Natural killer cell (primary cell): ENCODE measurements at regions of chr2 and their contacts with region 1.

Region 1: GRCh38 chr2:37648331-37649011 is 23.0 kb downstream of the CDC42EP3 start:
- DNase-seq: peak; percentile 57 to 72
- ATAC-seq: peak; percentile 82 to 91 (median 87)
- H3K4me3 ChIP-seq: no peak overlapping the region
- H3K4me3 Mint-ChIP-seq: peak overlapping the region; percentile 93
- H3K27ac ChIP-seq: peak overlapping the region; percentile 77
- H3K27ac Mint-ChIP-seq: peak overlapping the region; percentile 91 to 96
- H3K4me1 ChIP-seq: peaks cover 72% of the 10 kb centered on the region
- H3K4me1 Mint-ChIP-seq: peaks cover 93 to 95% of the 10 kb centered on the region in 2 donors
- H3K27me3 ChIP-seq: no peaks in the 10 kb centered on the region
- H3K27me3 Mint-ChIP-seq: no peaks in the 10 kb centered on the region
- CTCF ChIP-seq: peak; percentile 47

Region 2: DNA sequence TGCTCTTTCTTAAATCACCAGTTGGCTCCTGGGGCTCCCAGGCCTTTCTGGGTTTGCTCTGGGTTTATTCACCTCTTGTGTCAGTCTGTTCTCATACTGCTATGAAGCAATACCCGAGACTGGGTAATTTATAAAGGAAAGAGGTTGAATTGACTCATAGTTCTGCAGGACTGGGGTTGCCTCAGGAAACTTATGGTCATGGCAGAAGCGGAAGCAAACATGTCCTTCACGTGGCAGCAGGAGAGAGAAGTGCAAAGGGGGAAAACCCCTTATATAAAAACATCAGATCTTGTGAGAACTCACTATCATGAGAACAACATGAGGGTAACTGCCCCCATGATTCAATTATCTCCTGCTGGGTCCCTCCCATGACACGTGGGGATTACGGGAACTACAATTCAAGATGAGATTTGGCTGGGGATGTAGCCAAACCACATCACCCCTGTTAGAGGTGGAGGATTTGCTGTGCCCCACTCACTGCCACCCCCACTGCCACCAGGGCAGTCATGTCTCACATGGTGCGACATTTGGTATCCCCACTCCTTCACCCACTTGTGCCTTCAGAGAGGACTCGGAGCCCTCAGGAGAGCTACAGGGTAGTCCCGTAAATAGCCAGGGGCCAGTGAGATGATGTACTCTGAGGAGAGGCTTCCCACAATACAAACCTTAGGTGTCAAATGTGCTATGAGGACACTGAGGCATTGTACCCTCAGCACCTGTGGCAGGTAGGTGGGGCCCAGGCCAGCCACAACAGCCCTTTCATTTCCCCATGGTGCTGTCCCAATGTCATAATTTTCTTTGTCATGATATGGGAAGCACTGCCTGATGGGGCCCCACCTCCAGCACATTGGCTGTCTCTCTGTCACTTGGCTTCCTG is 12.7 kb before region 1 on chr2:
- intact Hi-C with region 1: loop called (anchors 1 kb)
- DNase-seq: peak; percentile 55 to 90
- ATAC-seq: peak; percentile 79 to 93 (median 89)
- H3K4me3 ChIP-seq: no peak overlapping the region
- H3K4me3 Mint-ChIP-seq: peak overlapping the region; percentile 74
- H3K27ac ChIP-seq: peak overlapping the region; percentile 91
- H3K27ac Mint-ChIP-seq: peak overlapping the region; percentile 91 to 96
- H3K4me1 ChIP-seq: peaks cover 38% of the 10 kb centered on the region
- H3K4me1 Mint-ChIP-seq: peaks cover 64 to 76% of the 10 kb centered on the region in 2 donors
- H3K27me3 ChIP-seq: no peaks in the 10 kb centered on the region
- H3K27me3 Mint-ChIP-seq: no peaks in the 10 kb centered on the region
- CTCF ChIP-seq: no peak

Region 3: DNA sequence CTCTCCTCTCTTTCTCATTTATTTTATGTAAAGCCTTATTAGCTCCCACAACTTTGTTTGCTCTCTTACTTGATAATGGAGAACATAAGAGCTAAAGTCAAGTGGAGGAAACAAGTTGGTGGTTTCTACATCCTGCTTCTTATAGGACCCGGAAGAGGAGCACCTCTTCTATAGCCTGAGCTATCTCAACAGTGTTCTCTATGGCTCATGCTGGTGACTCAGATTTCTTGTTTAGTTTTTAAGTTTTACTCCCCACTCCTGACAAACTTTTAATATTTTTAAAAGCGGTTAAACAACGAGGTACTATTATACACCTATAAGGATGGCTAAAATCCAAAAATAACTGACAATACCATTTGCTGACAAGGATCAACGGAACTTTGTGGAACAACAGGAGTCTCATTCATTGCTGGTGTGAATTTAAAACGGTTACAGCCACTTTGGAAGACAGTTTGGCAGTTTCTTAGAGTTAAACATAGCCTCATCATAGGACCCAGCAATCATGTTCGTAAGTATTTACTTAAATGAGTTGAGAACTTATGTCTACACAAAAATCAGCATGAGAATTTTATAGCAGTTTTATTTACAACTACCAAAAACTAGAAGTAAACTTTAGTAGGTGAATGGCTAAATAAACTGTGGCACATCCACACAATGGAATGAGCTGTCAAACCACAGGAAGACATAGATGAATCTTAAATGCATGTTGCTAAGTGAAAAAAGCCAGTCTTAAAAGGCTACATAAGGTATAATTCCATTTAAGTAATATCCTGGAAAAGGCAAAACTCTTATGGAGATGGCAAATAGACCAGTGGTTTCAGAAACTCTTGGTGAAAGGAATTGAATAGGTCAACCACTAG is 35.7 kb after region 1 on chr2:
- intact Hi-C with region 1: loop called (anchors 5 kb)
- DNase-seq: peak in 1 of 2 donors; percentile 69
- ATAC-seq: peak; percentile 89 to 99 (median 97)
- H3K4me3 ChIP-seq: no peak overlapping the region
- H3K4me3 Mint-ChIP-seq: peak overlapping the region; percentile 80
- H3K27ac ChIP-seq: peak overlapping the region; percentile 65
- H3K27ac Mint-ChIP-seq: peak overlapping the region; percentile 90 to 92
- H3K4me1 ChIP-seq: peaks cover 12% of the 10 kb centered on the region
- H3K4me1 Mint-ChIP-seq: peaks cover 29 to 37% of the 10 kb centered on the region in 2 donors
- H3K27me3 ChIP-seq: no peaks in the 10 kb centered on the region
- H3K27me3 Mint-ChIP-seq: no peaks in the 10 kb centered on the region
- CTCF ChIP-seq: no peak

Region 4: DNA sequence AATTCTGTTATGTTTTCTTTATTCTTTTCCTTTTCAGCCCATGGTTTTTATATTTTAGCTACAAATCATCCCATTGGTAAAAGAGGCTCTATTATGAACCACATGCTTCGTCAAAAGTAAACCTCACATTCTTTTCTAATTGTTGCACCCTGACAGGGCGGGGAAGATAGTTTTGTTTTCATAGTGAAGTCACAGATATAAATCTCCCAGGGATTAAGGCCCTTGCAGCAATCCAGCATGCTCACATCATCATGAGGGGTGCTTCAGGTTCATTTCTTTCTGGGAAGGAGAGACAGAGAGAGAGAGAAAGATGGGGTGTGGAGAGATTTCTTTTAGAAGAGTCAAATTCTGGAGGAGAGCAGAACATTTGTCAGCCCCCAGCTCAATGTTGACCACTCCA is 147.5 kb after region 1 on chr2:
- intact Hi-C with region 1: no loop called
- DNase-seq: no peak
- ATAC-seq: no peak
- H3K4me3 ChIP-seq: no peak overlapping the region
- H3K4me3 Mint-ChIP-seq: no peak overlapping the region
- H3K27ac ChIP-seq: no peak overlapping the region
- H3K27ac Mint-ChIP-seq: no peak overlapping the region
- H3K4me1 ChIP-seq: no peaks in the 10 kb centered on the region
- H3K4me1 Mint-ChIP-seq: peaks cover 9 to 17% of the 10 kb centered on the region in 2 donors
- H3K27me3 ChIP-seq: no peaks in the 10 kb centered on the region
- H3K27me3 Mint-ChIP-seq: no peaks in the 10 kb centered on the region
- CTCF ChIP-seq: no peak